AG04450 (cell line): ENCODE measurements at regions of chr4 and their contacts with region 1.

Region 1: GRCh38 chr4:95155759-95156451 is 392.9 kb downstream of the UNC5C start:
- DNase-seq: no peak
- H3K4me3 ChIP-seq: no peak overlapping the region
- H3K27ac ChIP-seq: no peak overlapping the region
- H3K27me3 ChIP-seq: peaks cover 3% of the 10 kb centered on the region
- CTCF ChIP-seq: peak; percentile 69

Region 2: GRCh38 chr4:95068818-95069478 is 87.0 kb before region 1 on chr4:
- CTCF ChIA-PET with region 1: no interaction called
- POLR2A ChIA-PET with region 1: no interaction called
- DNase-seq: no peak
- H3K4me3 ChIP-seq: no peak overlapping the region
- H3K27ac ChIP-seq: no peak overlapping the region
- H3K27me3 ChIP-seq: no peaks in the 10 kb centered on the region
- CTCF ChIP-seq: no peak

Region 3: DNA sequence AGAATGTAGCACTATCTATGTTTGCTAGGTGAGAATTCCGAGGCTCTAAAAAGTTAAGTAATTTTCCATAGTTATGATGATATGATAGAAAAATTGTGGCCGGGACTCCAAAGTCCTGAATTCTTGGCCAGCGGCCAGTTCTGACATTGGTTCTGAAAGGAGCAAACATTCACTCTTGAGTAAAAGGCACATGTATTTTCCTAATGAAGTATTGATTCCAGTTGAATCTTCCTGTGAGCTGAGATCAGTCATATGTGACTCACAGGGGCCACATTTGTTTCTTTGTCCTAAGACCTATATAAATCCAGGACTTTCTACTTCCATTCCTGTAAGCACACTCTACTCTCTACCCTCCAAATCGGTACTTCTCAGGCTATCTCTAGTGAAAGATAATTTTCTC is 48.3 kb before region 1 on chr4:
- CTCF ChIA-PET with region 1: no interaction called
- POLR2A ChIA-PET with region 1: no interaction called
- DNase-seq: no peak
- H3K4me3 ChIP-seq: no peak overlapping the region
- H3K27ac ChIP-seq: no peak overlapping the region
- H3K27me3 ChIP-seq: no peaks in the 10 kb centered on the region
- CTCF ChIP-seq: no peak

Region 4: DNA sequence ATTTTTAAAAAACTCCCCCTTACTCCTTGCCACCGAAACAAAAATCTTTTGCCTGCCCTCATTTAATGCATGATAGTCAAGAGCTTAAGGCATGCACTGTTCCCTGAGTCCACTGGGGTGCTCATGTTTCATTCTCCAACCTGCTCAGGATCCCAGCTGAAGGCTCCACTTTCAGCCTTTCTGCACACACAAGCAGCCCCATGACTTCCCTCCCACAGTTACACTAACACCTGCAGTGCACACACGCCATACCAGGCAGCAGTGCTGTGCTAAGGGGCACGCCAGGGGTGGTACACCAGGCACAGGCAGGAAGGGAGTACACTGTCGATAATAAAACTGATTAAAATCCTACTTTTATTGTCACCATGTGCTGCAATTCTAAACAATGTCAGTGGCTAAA is 13.0 kb before region 1 on chr4:
- CTCF ChIA-PET with region 1: interaction called, 10 read pairs
- POLR2A ChIA-PET with region 1: no interaction called
- DNase-seq: no peak
- H3K4me3 ChIP-seq: no peak overlapping the region
- H3K27ac ChIP-seq: no peak overlapping the region
- H3K27me3 ChIP-seq: no peaks in the 10 kb centered on the region
- CTCF ChIP-seq: no peak

Region 5: DNA sequence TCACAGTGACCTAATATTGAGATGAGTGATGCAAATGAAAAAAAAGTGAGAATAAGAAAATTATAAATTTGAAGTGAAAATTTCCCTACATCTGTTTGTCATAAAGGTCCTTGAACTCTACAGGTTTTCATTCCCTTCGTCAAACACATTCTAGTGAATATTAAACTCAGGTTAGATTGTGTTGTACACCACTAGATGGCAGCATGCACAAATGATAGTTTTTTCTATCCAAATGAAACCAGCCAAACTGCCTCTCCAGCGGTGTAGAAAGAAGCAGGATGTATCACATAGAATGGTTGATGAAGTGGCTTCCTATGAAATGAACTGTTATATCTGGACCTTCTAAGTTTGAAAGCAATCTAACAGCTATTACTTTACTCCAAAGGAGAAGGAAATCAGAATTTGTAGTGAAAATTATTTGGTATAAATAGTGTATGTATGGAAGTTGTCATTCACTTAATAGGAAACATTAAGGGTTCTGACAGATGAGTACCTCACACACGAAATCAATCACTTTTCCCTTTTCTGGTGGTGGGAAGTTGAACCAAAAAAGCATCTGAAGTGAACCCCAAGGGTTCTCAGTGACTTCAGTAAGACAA is 10.1 kb after region 1 on chr4:
- CTCF ChIA-PET with region 1: interaction called, 40 read pairs
- POLR2A ChIA-PET with region 1: no interaction called
- DNase-seq: peak; percentile 33
- H3K4me3 ChIP-seq: no peak overlapping the region
- H3K27ac ChIP-seq: no peak overlapping the region
- H3K27me3 ChIP-seq: no peaks in the 10 kb centered on the region
- CTCF ChIP-seq: peak; percentile 63

Region 6: GRCh38 chr4:95758001-95758400 is 602.1 kb after region 1 on chr4:
- CTCF ChIA-PET with region 1: no interaction called
- POLR2A ChIA-PET with region 1: no interaction called
- DNase-seq: no peak
- H3K4me3 ChIP-seq: no peak overlapping the region
- H3K27ac ChIP-seq: no peak overlapping the region
- H3K27me3 ChIP-seq: no peaks in the 10 kb centered on the region
- CTCF ChIP-seq: no peak